ENCODE measurements at regions of chr20 and their contacts with region 1.

Region 1: GRCh38 chr20:22691369-22692118 is 107.2 kb upstream of the FOXA2 start:
- DNase-seq: peak; percentile 84 to 91 (median 90)
- ATAC-seq: peak; percentile 92 to 94
- H3K4me3 ChIP-seq: no peak overlapping the region
- H3K27ac ChIP-seq: no peak overlapping the region
- H3K4me1 ChIP-seq: peaks cover 6% of the 10 kb centered on the region
- H3K27me3 ChIP-seq: no peaks in the 10 kb centered on the region

Region 2: GRCh38 chr20:22611636-22612035 is 79.9 kb before region 1 on chr20:
- intact Hi-C with region 1: no loop called
- DNase-seq: no peak
- ATAC-seq: no peak
- H3K4me3 ChIP-seq: no peak overlapping the region
- H3K27ac ChIP-seq: no peak overlapping the region
- H3K4me1 ChIP-seq: no peaks in the 10 kb centered on the region
- H3K27me3 ChIP-seq: peaks cover 6% of the 10 kb centered on the region

Region 3: GRCh38 chr20:23050847-23051631 is 359.5 kb after region 1 on chr20:
- intact Hi-C with region 1: loop called in 1 of 4 experiments (anchors 10 kb)
- DNase-seq: peak; percentile 86 to 96 (median 94)
- ATAC-seq: peak; percentile 60 to 62
- H3K4me3 ChIP-seq: peak overlapping the region; percentile 39
- H3K27ac ChIP-seq: peak overlapping the region; percentile 21
- H3K4me1 ChIP-seq: no peaks in the 10 kb centered on the region
- H3K27me3 ChIP-seq: no peaks in the 10 kb centered on the region

Region 4: GRCh38 chr20:23235173-23236027 is 543.9 kb after region 1 on chr20:
- intact Hi-C with region 1: loop called (anchors 2 to 10 kb)
- DNase-seq: peak; percentile 74 to 89 (median 88)
- ATAC-seq: peak; percentile 88 to 94
- H3K4me3 ChIP-seq: no peak overlapping the region
- H3K27ac ChIP-seq: no peak overlapping the region
- H3K4me1 ChIP-seq: no peaks in the 10 kb centered on the region
- H3K27me3 ChIP-seq: no peaks in the 10 kb centered on the region

Region 5: DNA sequence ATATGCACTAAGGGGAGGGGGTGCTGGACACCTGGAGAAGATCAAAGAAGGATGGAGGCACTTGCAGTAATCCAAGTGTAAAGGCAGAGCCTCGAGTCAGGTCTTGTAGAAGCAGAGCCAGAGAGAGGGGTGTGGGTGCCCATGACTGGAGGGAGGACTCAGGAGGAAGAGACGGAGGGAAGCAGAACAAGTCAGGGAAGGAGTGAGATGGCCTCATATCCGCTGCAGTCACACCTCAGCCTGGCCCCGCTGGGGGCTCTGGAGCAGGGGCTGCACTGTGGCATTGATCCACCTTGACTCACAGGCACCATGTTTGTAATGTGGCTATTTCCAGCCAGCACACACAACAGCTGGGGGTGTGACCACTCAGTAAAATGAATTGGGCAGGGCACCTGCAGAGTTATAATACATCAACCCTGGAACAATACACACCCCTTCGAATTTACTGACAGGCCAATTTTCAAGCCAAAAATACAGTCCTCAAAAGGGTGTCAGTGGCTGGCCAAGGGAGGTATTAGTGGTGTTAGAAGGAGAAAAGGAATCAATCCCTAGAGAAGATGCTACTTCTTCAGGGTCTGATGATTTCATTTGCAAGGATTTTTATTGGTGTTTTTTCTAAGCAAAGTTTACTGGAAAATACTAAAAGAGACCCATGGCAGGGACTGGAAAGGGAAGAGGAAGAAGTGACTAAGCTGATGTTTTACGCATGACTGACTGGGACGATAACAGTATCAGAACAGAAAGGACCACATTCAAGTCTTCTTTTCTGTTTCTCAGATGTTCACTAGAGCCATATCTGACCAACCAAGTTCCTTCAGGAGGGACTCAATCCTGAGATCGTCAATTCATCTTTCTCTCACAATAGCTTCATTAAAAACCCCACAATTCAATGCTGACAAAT is 640.2 kb after region 1 on chr20:
- intact Hi-C with region 1: loop called in 1 of 4 experiments (anchors 10 kb)
- DNase-seq: no peak
- ATAC-seq: peak in 1 of 2 donors; percentile 84
- H3K4me3 ChIP-seq: no peak overlapping the region
- H3K27ac ChIP-seq: no peak overlapping the region
- H3K4me1 ChIP-seq: no peaks in the 10 kb centered on the region
- H3K27me3 ChIP-seq: no peaks in the 10 kb centered on the region

Region 6: DNA sequence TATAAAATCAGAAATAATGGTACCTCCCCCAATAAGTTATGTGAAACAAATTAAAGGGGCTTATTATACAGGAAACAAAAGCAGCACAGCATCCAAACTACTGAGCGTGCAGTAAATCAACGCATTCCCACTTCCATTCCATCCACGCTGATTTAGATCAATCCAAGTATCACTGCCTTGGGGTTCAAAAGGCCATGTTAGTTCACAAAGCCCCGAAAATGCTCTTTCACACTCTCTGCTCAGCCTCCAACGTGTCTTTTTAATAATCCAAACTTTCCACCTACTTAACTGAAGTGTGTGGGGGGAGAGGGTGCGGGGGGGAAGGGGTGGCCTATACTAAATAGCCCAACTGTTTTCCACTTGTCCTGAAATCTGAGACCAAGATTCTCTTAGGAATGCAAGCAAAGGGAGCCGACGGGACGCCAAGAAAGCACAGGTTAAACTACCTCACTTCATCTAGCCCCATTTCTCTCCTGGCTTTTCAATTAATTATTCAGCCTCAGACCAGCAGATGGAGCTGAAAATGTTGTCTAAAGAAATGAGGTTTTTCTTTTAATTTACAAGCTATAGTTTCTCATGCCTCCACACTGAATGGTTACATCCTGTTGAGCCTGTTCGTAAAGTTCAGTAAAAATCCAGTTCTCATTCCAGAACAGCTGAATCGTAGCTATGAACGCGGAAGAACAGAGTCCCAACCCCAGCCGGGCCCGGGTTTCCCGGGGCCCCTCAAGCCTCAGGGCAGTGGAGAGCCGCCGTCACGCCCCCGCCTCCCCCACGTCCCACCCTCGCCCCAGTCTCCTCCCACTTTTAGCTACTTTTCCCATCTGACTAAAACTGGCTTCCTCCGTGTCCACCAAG is 658.0 kb after region 1 on chr20:
- intact Hi-C with region 1: loop called in 2 of 4 experiments (anchors 5 kb)
- DNase-seq: peak in 2 of 3 donors; percentile 50 to 83
- ATAC-seq: peak; percentile 85 to 86
- H3K4me3 ChIP-seq: peak overlapping the region; percentile 83
- H3K27ac ChIP-seq: peak overlapping the region; percentile 100
- H3K4me1 ChIP-seq: no peaks in the 10 kb centered on the region
- H3K27me3 ChIP-seq: no peaks in the 10 kb centered on the region

Measured in right cardiac atrium (tissue), 5 donors.